ENCODE measurements at regions of chr1 and their contacts with region 1.

Region 1: GRCh38 chr1:198359024-198359653 is 181.3 kb downstream of the ATP6V1G3 start:
- DNase-seq: peak; percentile 62
- H3K4me3 Mint-ChIP-seq: no peak overlapping the region
- H3K27ac Mint-ChIP-seq: no peak overlapping the region
- H3K4me1 Mint-ChIP-seq: peaks cover 10% of the 10 kb centered on the region
- H3K27me3 Mint-ChIP-seq: no peaks in the 10 kb centered on the region
- CTCF ChIP-seq: peak; percentile 75

Region 2: DNA sequence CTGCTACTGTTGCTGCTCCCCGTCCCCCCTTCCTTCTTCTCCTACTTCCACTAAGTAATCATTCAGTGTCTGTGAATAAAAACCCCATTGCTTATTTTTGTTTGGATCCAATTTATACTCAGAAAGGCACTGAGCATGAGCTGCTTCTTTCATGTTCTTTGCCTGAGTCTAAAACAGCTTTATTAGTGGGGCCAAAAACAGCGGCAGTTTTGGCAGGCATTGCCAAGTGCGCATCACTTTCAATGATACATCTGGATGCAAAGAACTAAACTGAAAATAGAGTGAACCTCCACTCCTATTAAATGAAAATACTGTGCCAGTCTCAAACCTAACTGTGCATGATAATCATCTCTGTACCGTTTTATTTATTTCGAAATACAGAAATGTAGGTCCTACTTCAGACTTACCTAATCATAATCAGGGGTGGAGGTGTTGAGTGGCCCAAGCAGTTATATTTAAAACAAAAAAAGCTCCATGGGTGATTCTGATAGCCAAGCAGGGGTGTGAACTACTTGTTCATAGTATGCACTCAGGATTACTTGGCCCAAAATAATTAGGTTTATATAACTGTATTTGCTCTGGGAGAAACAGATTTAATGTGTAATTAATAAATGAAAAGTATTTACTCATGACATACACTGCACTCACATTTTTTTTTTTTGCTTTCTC is 154.0 kb before region 1 on chr1:
- CTCF ChIA-PET with region 1: no interaction called
- POLR2A ChIA-PET with region 1: no interaction called
- intact Hi-C with region 1: loop called (anchors 2 kb)
- DNase-seq: no peak
- H3K4me3 Mint-ChIP-seq: peak overlapping the region; percentile 20
- H3K27ac Mint-ChIP-seq: peak overlapping the region; percentile 79
- H3K4me1 Mint-ChIP-seq: peaks cover 21% of the 10 kb centered on the region
- H3K27me3 Mint-ChIP-seq: no peaks in the 10 kb centered on the region
- CTCF ChIP-seq: no peak

Measured in MCF 10A (cell line).